HCT116 (cell line): ENCODE measurements at regions of chr2 and their contacts with region 1.

Region 1: DNA sequence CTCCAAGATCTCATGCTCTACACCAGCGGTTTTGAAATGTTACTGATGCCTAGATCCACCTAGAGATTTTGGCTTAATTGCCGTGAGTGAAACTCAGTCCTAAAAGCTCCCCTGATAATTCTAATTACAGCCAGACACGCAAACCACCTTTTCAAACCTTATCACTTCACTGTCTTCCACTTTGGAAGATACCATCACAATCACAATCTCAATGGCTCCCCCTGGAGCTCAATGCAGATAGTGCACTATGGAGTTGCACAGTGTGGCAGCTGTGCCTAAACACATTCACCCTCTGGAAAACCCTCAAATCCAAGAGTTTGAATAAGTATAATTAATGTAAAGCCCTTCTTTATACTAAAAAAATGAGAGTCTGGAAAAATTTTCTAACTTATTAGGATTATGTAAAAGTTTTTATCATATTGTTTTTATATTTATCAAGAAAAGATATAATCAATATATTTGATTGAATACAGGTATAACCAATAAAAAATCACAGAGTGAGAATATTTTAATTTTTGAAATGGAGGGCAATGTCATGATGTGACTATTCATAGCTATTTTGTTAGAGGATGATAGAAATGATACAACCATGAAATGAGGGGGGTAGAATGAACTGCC is 102.9 kb upstream of the SLC8A1 start:
- DNase-seq: peak; percentile 27
- ATAC-seq: peak; percentile 92
- H3K4me3 ChIP-seq: no peak overlapping the region
- H3K27ac ChIP-seq: no peak overlapping the region
- H3K4me1 ChIP-seq: no peaks in the 10 kb centered on the region
- H3K27me3 ChIP-seq: peaks cover 21% of the 10 kb centered on the region
- CTCF ChIP-seq: peak; percentile 59 to 86 (median 84)
- POLR2A ChIP-seq: no peak
- RAD21 ChIP-seq: peak; percentile 71

Region 2: DNA sequence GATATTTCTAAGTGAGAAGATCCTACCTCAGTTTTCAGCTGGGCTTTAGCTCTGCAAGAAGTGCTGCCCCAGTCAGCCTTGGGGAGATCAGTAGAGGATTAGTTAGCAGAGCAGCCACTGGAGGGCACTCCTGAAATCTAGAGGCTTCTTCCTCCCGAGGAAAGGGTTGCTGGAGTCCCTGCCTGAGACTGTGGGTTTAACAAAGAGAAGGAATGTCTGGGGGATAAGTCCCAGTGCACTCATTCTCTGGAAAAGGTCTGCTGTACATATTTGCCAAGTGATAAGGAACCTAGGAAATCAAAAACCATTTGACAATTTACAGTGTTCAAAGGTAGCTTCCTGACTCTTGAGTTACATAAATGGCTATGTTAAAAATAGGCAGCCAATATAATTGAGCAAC is 310.1 kb before region 1 on chr2:
- CTCF ChIA-PET with region 1: interaction called, 5 read pairs
- POLR2A ChIA-PET with region 1: no interaction called
- RAD21 ChIA-PET with region 1: no interaction called
- intact Hi-C with region 1: loop called (anchors 1 kb)
- DNase-seq: peak; percentile 33
- ATAC-seq: peak; percentile 98
- H3K4me3 ChIP-seq: no peak overlapping the region
- H3K27ac ChIP-seq: no peak overlapping the region
- H3K4me1 ChIP-seq: no peaks in the 10 kb centered on the region
- H3K27me3 ChIP-seq: 0 out of 2 replicates have a peak, but pooled peaks cover 5% of the 10 kb centered on the region
- CTCF ChIP-seq: peak; percentile 42 to 60 (median 59); a peak in 5 of 6 replicates
- POLR2A ChIP-seq: no peak
- RAD21 ChIP-seq: peak; percentile 57

Region 3: DNA sequence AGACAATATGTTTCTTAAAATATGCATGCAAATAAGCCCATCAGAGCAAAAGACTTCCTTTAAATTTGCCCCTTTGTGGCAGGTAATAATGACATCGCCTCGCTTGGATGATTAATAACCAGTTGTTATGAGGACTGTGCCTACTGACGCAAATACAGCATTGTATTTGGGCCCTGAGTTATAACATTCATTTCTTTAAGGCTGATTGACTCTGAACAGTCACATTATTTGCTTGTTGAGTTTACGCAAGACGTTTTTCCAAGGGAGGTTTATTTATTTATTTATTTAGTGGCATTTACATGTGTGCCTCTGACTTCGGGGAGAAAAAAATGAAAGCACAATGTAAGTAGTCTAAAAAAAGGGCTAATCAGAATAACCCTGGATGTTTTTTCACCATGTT is 191.1 kb before region 1 on chr2:
- CTCF ChIA-PET with region 1: no interaction called
- POLR2A ChIA-PET with region 1: no interaction called
- RAD21 ChIA-PET with region 1: no interaction called
- intact Hi-C with region 1: no loop called
- DNase-seq: no peak
- ATAC-seq: no peak
- H3K4me3 ChIP-seq: no peak overlapping the region
- H3K27ac ChIP-seq: no peak overlapping the region
- H3K4me1 ChIP-seq: no peaks in the 10 kb centered on the region
- H3K27me3 ChIP-seq: no peaks in the 10 kb centered on the region
- CTCF ChIP-seq: no peak
- POLR2A ChIP-seq: no peak
- RAD21 ChIP-seq: no peak

Region 4: GRCh38 chr2:40412456-40412855 is 142.3 kb before region 1 on chr2:
- CTCF ChIA-PET with region 1: no interaction called
- POLR2A ChIA-PET with region 1: no interaction called
- RAD21 ChIA-PET with region 1: no interaction called
- intact Hi-C with region 1: no loop called
- DNase-seq: peak; percentile 16
- ATAC-seq: peak; percentile 86
- H3K4me3 ChIP-seq: no peak overlapping the region
- H3K27ac ChIP-seq: no peak overlapping the region
- H3K4me1 ChIP-seq: peaks cover 6 to 11% of the 10 kb centered on the region in 2 experiments; a peak in 3 of 4 replicates
- H3K27me3 ChIP-seq: no peaks in the 10 kb centered on the region
- CTCF ChIP-seq: no peak
- POLR2A ChIP-seq: no peak
- RAD21 ChIP-seq: no peak

Region 5: GRCh38 chr2:40448468-40449079 is 106.2 kb before region 1 on chr2:
- CTCF ChIA-PET with region 1: interaction called, 4 read pairs
- POLR2A ChIA-PET with region 1: no interaction called
- RAD21 ChIA-PET with region 1: no interaction called
- intact Hi-C with region 1: loop called (anchors 1 kb)
- DNase-seq: peak; percentile 10
- ATAC-seq: peak; percentile 81
- H3K4me3 ChIP-seq: no peak overlapping the region
- H3K27ac ChIP-seq: no peak overlapping the region
- H3K4me1 ChIP-seq: no peaks in the 10 kb centered on the region
- H3K27me3 ChIP-seq: no peaks in the 10 kb centered on the region
- CTCF ChIP-seq: peak; percentile 23 to 66 (median 54); a peak in 4 of 6 replicates
- POLR2A ChIP-seq: no peak
- RAD21 ChIP-seq: peak; percentile 37; the same call in 1 of the 2 replicates